H1 (cell line): ENCODE measurements at regions of chr5 and their contacts with region 1.

Region 1: DNA sequence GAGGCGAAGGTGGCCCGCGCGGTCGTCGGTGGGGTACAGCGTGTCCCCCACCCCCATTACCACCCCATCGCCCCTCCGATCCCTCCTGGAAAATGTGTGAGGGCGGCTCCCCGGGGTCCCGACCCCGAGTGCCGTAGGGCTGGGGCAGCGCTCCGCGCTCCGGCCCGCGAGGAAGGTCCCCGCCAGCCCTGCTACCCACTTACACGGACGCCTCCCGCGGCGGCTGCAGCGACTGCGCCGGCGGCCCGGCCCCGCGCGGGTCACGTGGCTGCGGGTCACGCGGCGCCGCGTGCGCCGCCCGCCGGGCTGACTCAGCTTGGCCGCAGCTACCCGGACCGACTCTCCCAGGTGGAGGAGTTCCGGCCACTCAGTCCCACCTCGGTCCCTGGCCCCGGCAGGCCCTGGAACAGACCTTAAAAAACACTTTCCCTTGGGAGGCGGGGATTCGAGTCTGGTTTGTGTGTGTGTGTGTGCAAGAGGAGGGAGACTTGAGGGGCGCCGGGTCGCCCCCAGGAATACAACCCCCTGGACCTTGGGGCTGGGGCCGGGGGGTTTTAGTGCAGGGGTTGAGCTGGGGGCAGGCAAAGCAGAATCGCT is at the start of gene GNPDA1:
- DNase-seq: peak; percentile 27 to 76
- H3K4me3 ChIP-seq: peak within 1 kb of the TSS; percentile 56 to 81 (median 68)
- H3K27ac ChIP-seq: peak within 1 kb of the TSS; percentile 59; the same call in 1 of the 2 replicates
- H3K4me1 ChIP-seq: peaks cover 0 to 2% (median 2%) of the 10 kb centered on the region in 4 experiments; a peak in 4 of 7 replicates
- H3K27me3 ChIP-seq: no peaks in the 10 kb centered on the region
- CTCF ChIP-seq: no peak
- EP300 ChIP-seq: no peak
- POLR2A ChIP-seq: peak; percentile 16 to 76; a peak in 2 of 3 replicates
- RAD21 ChIP-seq: no peak
- total RNA-seq, gene GNPDA1: 93.6 and 94.3 TPM in 2 replicates

Region 2: DNA sequence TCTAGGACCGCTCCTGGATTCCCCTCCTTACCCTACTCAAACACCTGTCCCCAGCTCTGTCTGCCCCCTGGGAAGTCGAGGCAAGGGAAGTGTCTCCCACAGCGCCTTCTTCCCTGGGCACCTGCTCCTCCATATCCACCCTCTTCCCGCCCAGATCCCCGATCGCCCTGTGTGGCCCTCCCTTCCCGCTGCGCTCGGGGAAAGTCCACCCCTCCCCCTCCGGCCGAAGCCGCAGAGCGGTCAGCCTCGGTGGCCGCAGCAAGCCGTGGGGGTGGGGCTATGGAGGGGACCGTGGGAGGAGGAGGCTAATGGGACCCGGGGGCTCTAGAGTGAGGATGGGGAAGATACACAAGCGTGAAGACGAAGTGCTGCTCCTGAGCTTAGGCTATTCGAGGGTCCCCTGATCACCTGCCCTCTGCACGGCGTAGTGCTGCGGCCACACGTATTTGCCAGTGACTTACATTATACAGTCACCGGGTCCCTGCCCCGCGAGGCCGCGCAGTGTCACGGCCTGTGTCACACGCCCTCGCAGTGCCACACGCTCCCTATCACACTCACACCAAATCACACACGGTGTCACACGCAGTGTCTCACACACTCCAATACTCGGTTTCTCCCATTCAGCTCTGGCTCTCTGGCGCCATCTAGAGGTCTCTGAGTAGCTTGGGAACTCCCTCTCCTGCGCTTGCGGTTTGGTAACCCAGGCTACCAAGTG is 134.0 kb before region 1 on chr5:
- CTCF ChIA-PET with region 1: no interaction called
- POLR2A ChIA-PET with region 1: no interaction called
- DNase-seq: peak in 1 of 2 experiments; percentile 92
- H3K4me3 ChIP-seq: peak overlapping the region; percentile 49 to 81 (median 66)
- H3K27ac ChIP-seq: peak overlapping the region; percentile 75
- H3K4me1 ChIP-seq: peaks cover 24 to 64% (median 47%) of the 10 kb centered on the region in 4 experiments
- H3K27me3 ChIP-seq: peaks cover 0 to 4% (median 0%) of the 10 kb centered on the region in 4 experiments; a peak in 1 of 7 replicates
- CTCF ChIP-seq: peak in 2 of 3 experiments; percentile 87 to 98; a peak in 3 of 4 replicates
- EP300 ChIP-seq: no peak
- POLR2A ChIP-seq: no peak; a peak in 1 of 3 replicates
- RAD21 ChIP-seq: peak; percentile 92 to 94

Region 3: DNA sequence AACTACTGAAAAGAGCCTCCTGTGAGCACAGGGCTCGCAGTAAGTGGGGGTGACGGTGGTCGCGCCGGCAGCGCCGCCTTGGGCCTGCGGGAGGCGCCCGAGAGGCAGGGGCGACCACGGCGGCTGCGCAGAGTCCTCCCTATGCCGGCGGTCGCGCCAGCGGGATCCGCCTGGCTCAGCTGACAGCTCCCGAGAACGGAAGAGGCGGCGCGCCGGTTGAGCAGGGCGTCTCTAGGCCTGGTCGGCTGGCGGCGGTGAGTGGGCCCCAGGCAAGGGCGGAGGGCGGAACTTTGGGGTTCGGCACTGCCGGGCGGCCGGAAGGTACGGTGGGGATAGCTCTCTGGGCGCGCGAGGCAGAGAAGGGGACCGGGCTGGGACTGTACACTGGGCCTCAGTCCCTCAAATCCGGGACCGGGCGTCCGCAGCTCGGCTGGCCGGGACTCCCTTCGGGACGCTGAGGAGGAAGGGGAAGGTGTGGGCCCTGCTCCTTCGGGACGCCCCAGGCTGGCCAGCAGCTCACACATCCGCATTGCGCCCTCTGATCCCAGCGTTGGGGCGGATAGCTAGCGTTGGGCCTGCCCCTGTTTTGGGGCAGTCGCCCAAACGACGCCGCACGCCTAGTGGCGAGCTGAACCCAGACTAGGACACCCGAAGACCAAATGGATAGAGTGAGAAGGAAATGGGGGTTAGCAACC is 43.8 kb before region 1 on chr5 and contains the start of gene RNF14:
- CTCF ChIA-PET with region 1: interaction called, 18 read pairs
- POLR2A ChIA-PET with region 1: interaction called, 10 read pairs
- DNase-seq: peak; percentile 89 to 97
- H3K4me3 ChIP-seq: peak within 1 kb of the TSS; percentile 63 to 77 (median 70)
- H3K27ac ChIP-seq: peak within 1 kb of the TSS; percentile 74
- H3K4me1 ChIP-seq: peaks cover 0 to 6% (median 3%) of the 10 kb centered on the region in 4 experiments; a peak in 3 of 7 replicates
- H3K27me3 ChIP-seq: no peaks in the 10 kb centered on the region
- CTCF ChIP-seq: peak; percentile 87 to 90 (median 88)
- EP300 ChIP-seq: no peak; a peak in 1 of 3 replicates
- POLR2A ChIP-seq: peak in 1 of 2 experiments; percentile 52; a peak in 1 of 3 replicates
- RAD21 ChIP-seq: peak; percentile 19 to 42; a peak in 3 of 4 replicates
- total RNA-seq, gene RNF14: 19.6 and 20.2 TPM in 2 replicates

Region 4: GRCh38 chr5:141992349-141992963 is 20.4 kb before region 1 on chr5:
- CTCF ChIA-PET with region 1: interaction called, 54 read pairs
- POLR2A ChIA-PET with region 1: interaction called, 4 read pairs
- DNase-seq: peak in 1 of 2 experiments; percentile 79
- H3K4me3 ChIP-seq: no peak overlapping the region
- H3K27ac ChIP-seq: no peak overlapping the region
- H3K4me1 ChIP-seq: no peaks in the 10 kb centered on the region
- H3K27me3 ChIP-seq: no peaks in the 10 kb centered on the region
- CTCF ChIP-seq: peak in 2 of 3 experiments; percentile 49 to 69; a peak in 2 of 4 replicates
- EP300 ChIP-seq: no peak
- POLR2A ChIP-seq: no peak
- RAD21 ChIP-seq: peak; percentile 55 to 66

Region 5: GRCh38 chr5:142000703-142001484 is 12.0 kb before region 1 on chr5:
- CTCF ChIA-PET with region 1: interaction called, 24 read pairs
- POLR2A ChIA-PET with region 1: interaction called, 11 read pairs
- DNase-seq: peak in 1 of 2 experiments; percentile 41
- H3K4me3 ChIP-seq: no peak overlapping the region
- H3K27ac ChIP-seq: no peak overlapping the region
- H3K4me1 ChIP-seq: no peaks in the 10 kb centered on the region
- H3K27me3 ChIP-seq: no peaks in the 10 kb centered on the region
- CTCF ChIP-seq: peak; percentile 23 to 53 (median 37)
- EP300 ChIP-seq: no peak
- POLR2A ChIP-seq: no peak
- RAD21 ChIP-seq: peak; percentile 32 to 49; a peak in 3 of 4 replicates

Region 6: DNA sequence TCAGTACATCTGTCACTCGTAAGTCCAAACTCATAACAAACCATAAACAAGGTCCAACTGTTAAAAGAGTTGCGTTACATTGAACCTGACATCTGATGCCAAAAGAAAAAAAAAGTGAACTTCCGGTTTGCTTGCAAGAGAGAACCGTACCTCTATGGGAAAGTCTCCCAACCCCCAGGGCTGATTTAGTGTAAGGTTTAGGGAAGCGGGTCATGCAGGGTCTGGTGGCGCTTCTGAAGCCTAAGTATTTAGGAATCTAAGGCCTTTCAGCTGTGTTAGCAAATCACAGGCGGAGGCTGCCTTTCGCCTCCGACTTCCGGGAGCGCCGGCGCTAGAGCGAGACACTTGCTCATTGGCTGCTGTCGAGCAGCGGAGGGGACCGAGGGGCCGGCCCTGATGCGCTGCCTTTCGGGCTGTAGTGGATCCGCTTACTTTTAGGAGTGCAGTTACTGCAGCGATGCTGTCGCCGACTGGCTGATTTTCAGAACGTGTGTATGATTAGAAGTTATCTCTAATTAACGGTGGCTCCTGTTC is 11.9 kb after region 1 on chr5:
- CTCF ChIA-PET with region 1: interaction called, 14 read pairs
- POLR2A ChIA-PET with region 1: interaction called, 8 read pairs
- DNase-seq: peak; percentile 77 to 84
- H3K4me3 ChIP-seq: peak overlapping the region; percentile 10 to 65 (median 56)
- H3K27ac ChIP-seq: no peak overlapping the region
- H3K4me1 ChIP-seq: no peaks in the 10 kb centered on the region
- H3K27me3 ChIP-seq: no peaks in the 10 kb centered on the region
- CTCF ChIP-seq: peak in 1 of 3 experiments; percentile 13; a peak in 1 of 4 replicates
- EP300 ChIP-seq: 0 out of 3 replicates have a peak, but pooled peaks of 1 of the 2 experiments have one; percentile 21
- POLR2A ChIP-seq: peak in 1 of 2 experiments; percentile 70; a peak in 2 of 3 replicates
- RAD21 ChIP-seq: no peak

Region 7: DNA sequence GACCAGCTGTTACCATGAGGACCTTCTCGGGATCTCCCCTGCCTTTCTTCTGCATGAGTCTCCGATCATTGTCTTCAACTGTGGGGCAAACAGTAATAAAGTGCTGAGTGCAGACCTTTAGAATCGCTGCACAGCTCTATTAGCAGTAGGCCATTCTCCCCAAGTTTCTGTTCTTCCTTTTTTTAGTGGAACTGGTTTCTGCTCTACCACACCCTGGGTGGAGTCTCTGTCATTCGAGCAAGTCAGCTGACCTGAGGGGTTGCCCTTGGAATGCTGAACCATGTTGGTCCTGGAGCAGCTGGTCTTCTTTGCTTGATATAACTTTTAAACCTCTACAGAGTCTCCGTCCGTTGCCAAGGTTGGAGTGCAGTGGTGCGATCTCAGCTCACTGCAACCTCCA is 33.3 kb after region 1 on chr5:
- CTCF ChIA-PET with region 1: interaction called, 11 read pairs
- POLR2A ChIA-PET with region 1: interaction called, 4 read pairs
- DNase-seq: no peak
- H3K4me3 ChIP-seq: no peak overlapping the region
- H3K27ac ChIP-seq: no peak overlapping the region
- H3K4me1 ChIP-seq: peaks cover 0 to 5% (median under 1%) of the 10 kb centered on the region in 4 experiments; a peak in 2 of 7 replicates
- H3K27me3 ChIP-seq: no peaks in the 10 kb centered on the region
- CTCF ChIP-seq: no peak
- EP300 ChIP-seq: no peak
- POLR2A ChIP-seq: no peak
- RAD21 ChIP-seq: no peak

Region 8: DNA sequence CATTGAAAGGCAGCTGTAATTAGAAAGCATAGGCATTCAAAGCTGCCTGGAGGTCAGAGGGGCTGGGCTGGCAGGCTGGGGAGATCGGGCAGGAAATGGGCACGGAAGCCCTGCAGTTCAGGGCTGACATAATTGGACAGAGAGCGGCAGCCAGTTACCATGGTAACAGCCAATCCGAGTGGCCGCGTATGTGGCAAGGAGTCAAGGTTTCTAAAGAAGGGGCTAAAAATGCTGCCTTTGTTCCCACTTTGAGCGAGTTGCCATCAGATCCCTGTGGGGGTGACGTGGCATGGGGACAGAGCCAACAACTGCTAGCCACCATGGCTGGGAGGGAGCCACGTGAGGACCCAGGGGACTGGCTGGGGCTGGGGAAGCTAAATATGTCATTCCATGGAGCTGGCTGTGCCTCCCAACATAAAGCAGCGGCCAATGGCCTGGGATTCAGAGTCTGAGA is 51.0 kb after region 1 on chr5:
- CTCF ChIA-PET with region 1: interaction called, 6 read pairs
- POLR2A ChIA-PET with region 1: interaction called, 12 read pairs
- DNase-seq: peak in 1 of 2 experiments; percentile 72
- H3K4me3 ChIP-seq: peak overlapping the region in 3 of 4 experiments; percentile 18 to 47 (median 30); a peak in 5 of 8 replicates
- H3K27ac ChIP-seq: no peak overlapping the region
- H3K4me1 ChIP-seq: peaks cover 0 to 3% (median 3%) of the 10 kb centered on the region in 4 experiments; a peak in 5 of 7 replicates
- H3K27me3 ChIP-seq: no peaks in the 10 kb centered on the region
- CTCF ChIP-seq: no peak
- EP300 ChIP-seq: no peak
- POLR2A ChIP-seq: no peak
- RAD21 ChIP-seq: no peak